MCF 10A (cell line): ENCODE measurements at regions of chr6 and their contacts with region 1.

Region 1: GRCh38 chr6:36027501-36028087 is at the start of gene MAPK14:
- DNase-seq: peak; percentile 100
- H3K4me3 Mint-ChIP-seq: peak within 1 kb of the TSS; percentile 88
- H3K27ac Mint-ChIP-seq: peak within 1 kb of the TSS; percentile 94
- H3K4me1 Mint-ChIP-seq: peaks cover 9% of the 10 kb centered on the region
- H3K27me3 Mint-ChIP-seq: no peaks in the 10 kb centered on the region
- CTCF ChIP-seq: peak; percentile 74
- total RNA-seq, gene MAPK14: 42.9 and 46.2 TPM in 2 replicates

Region 2: DNA sequence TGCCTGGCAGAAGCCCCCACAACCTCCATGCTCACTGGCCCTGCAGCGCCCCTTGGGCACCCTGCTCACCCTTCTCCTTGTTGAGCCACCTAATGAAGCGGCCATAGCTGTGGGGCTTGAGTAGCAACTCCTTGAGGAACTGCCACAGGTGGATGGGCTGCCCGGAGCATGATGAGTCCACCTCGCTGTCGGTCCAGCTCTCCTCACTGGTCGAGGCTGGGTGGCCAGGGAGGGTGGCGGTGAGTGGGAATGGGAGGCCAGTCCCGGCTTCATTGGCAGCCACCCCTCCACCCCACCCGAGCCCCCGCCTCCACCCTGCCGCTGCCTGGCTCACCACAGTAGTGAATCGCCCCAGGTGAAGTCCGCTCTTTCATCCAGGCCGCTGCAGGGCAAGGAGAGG is 1488.4 kb before region 1 on chr6:
- CTCF ChIA-PET with region 1: no interaction called
- POLR2A ChIA-PET with region 1: no interaction called
- intact Hi-C with region 1: no loop called
- DNase-seq: no peak
- H3K4me3 Mint-ChIP-seq: no peak overlapping the region
- H3K27ac Mint-ChIP-seq: no peak overlapping the region
- H3K4me1 Mint-ChIP-seq: peaks cover 9% of the 10 kb centered on the region
- H3K27me3 Mint-ChIP-seq: no peaks in the 10 kb centered on the region
- CTCF ChIP-seq: no peak

Region 3: GRCh38 chr6:35817515-35817914 is 210.1 kb before region 1 on chr6:
- CTCF ChIA-PET with region 1: no interaction called
- POLR2A ChIA-PET with region 1: no interaction called
- intact Hi-C with region 1: no loop called
- DNase-seq: no peak
- H3K4me3 Mint-ChIP-seq: no peak overlapping the region
- H3K27ac Mint-ChIP-seq: no peak overlapping the region
- H3K4me1 Mint-ChIP-seq: no peaks in the 10 kb centered on the region
- H3K27me3 Mint-ChIP-seq: no peaks in the 10 kb centered on the region
- CTCF ChIP-seq: no peak

Region 4: DNA sequence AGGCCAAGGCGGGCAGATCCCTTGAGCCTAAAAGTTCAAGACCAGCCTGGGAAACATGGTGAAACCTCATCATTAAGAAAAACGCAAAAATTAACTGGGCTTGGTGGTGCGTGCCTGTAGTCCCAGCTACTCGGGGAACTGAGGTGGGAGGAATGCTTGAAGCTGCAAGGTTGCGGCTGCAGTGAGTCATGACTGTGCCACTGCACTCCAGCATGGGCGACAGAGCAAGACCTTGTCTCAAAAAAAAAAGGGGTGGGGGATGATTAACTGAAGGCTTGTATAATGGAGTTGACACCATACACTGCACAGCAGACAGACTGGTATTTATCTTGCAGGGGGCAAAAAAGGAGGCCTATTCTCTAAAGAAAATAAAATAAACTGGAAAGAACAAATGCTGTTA is 134.3 kb before region 1 on chr6:
- CTCF ChIA-PET with region 1: no interaction called
- POLR2A ChIA-PET with region 1: no interaction called
- intact Hi-C with region 1: no loop called
- DNase-seq: peak; percentile 16
- H3K4me3 Mint-ChIP-seq: no peak overlapping the region
- H3K27ac Mint-ChIP-seq: no peak overlapping the region
- H3K4me1 Mint-ChIP-seq: peaks cover 16% of the 10 kb centered on the region
- H3K27me3 Mint-ChIP-seq: no peaks in the 10 kb centered on the region
- CTCF ChIP-seq: no peak

Region 5: DNA sequence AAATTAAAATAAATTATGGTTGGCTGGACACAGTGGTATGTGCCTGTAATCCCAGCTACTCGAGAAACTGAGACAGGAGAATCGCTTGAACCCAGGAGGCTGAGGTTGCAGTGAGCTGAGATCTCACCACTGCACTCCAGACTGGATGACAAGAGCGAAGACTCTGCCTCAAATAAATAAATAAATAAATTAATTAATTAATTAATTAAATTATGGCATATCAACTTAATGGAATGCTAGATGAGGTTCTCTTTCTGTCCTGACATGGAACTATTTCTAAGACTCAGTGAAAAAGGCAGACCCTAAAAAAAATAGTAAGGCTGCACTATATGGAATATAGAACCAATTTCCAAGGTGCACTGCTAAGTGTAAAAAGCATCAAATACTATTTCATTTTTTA is 111.5 kb before region 1 on chr6:
- CTCF ChIA-PET with region 1: interaction called, 3 read pairs
- POLR2A ChIA-PET with region 1: interaction called, 54 read pairs
- intact Hi-C with region 1: loop called (anchors 2 kb)
- DNase-seq: no peak
- H3K4me3 Mint-ChIP-seq: no peak overlapping the region
- H3K27ac Mint-ChIP-seq: no peak overlapping the region
- H3K4me1 Mint-ChIP-seq: peaks cover 12% of the 10 kb centered on the region
- H3K27me3 Mint-ChIP-seq: no peaks in the 10 kb centered on the region
- CTCF ChIP-seq: no peak

Region 6: DNA sequence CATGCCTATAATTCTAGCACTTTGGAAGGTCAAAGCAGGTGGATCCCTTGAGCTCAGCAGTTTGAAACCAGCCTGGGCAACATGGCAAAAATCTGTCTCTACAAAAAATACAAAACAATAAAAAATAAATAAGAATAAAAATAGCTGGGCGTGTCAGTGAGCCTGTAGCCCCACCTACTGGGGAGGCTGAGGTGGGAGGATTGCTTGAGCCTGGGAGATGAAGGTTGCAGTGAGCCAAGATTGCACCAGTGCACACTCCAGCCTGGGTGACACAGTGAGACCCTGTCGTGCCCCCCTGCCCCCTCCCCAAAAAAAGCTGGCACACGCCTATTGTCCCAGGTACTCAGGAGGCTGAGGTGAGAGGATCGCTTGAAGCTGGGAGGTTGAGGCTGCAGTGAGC is 71.6 kb before region 1 on chr6:
- CTCF ChIA-PET with region 1: no interaction called
- POLR2A ChIA-PET with region 1: interaction called, 20 read pairs
- intact Hi-C with region 1: no loop called
- DNase-seq: peak; percentile 11
- H3K4me3 Mint-ChIP-seq: no peak overlapping the region
- H3K27ac Mint-ChIP-seq: no peak overlapping the region
- H3K4me1 Mint-ChIP-seq: peaks cover 40% of the 10 kb centered on the region
- H3K27me3 Mint-ChIP-seq: peaks cover 27% of the 10 kb centered on the region
- CTCF ChIP-seq: peak; percentile 28

Region 7: DNA sequence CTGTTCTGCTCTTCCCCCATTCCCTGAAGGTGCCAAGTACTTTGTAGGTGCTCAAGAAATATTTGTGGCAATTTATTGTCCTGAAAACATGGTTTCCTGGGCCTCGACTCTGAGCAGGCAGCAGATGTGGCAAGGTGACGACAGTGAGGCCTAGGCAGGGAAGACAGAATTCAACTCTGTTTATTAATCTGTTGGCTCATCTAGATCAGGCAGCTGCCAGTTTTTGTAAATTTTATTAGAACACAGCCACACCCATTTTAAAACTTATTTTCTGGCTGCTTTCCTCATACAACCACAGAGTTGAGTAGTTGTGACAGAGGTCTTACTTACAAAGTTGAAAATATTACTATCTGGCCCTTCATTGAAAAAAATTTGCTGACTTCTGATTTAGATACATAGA is 24.5 kb after region 1 on chr6:
- CTCF ChIA-PET with region 1: interaction called, 4 read pairs
- POLR2A ChIA-PET with region 1: interaction called, 77 read pairs
- intact Hi-C with region 1: no loop called
- DNase-seq: no peak
- H3K4me3 Mint-ChIP-seq: no peak overlapping the region
- H3K27ac Mint-ChIP-seq: no peak overlapping the region
- H3K4me1 Mint-ChIP-seq: no peaks in the 10 kb centered on the region
- H3K27me3 Mint-ChIP-seq: no peaks in the 10 kb centered on the region
- CTCF ChIP-seq: no peak

Region 8: DNA sequence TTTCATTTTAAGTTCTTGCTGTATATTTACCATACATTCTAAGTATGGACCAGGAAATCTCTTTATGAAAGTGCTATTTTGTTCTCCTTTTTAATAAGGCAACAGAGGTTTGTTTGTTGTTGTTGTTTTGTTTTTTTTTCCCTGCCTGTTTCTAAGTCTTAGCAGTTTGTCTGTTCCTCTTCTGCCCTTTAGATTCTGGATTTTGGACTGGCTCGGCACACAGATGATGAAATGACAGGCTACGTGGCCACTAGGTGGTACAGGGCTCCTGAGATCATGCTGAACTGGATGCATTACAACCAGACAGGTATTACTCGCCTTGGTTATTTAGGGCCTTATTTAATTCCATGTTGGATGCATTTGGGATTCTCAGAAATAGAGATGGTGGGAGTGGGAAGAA is 48.1 kb after region 1 on chr6:
- CTCF ChIA-PET with region 1: no interaction called
- POLR2A ChIA-PET with region 1: interaction called, 11 read pairs
- intact Hi-C with region 1: no loop called
- DNase-seq: peak; percentile 25
- H3K4me3 Mint-ChIP-seq: no peak overlapping the region
- H3K27ac Mint-ChIP-seq: peak overlapping the region; percentile 46
- H3K4me1 Mint-ChIP-seq: no peaks in the 10 kb centered on the region
- H3K27me3 Mint-ChIP-seq: no peaks in the 10 kb centered on the region
- CTCF ChIP-seq: peak; percentile 9

Region 9: GRCh38 chr6:36094753-36095496 is 67.3 kb after region 1 on chr6:
- CTCF ChIA-PET with region 1: interaction called, 134 read pairs
- POLR2A ChIA-PET with region 1: interaction called, 112 read pairs
- intact Hi-C with region 1: loop called (anchors 1 kb)
- DNase-seq: peak; percentile 81
- H3K4me3 Mint-ChIP-seq: no peak overlapping the region
- H3K27ac Mint-ChIP-seq: peak overlapping the region; percentile 4
- H3K4me1 Mint-ChIP-seq: peaks cover 10% of the 10 kb centered on the region
- H3K27me3 Mint-ChIP-seq: no peaks in the 10 kb centered on the region
- CTCF ChIP-seq: peak; percentile 94

Region 10: GRCh38 chr6:36196880-36197548 is 169.4 kb after region 1 on chr6:
- CTCF ChIA-PET with region 1: interaction called, 3 read pairs
- POLR2A ChIA-PET with region 1: interaction called, 6 read pairs
- intact Hi-C with region 1: loop called (anchors 1 kb)
- DNase-seq: peak; percentile 96
- H3K4me3 Mint-ChIP-seq: peak overlapping the region; percentile 87
- H3K27ac Mint-ChIP-seq: peak overlapping the region; percentile 27
- H3K4me1 Mint-ChIP-seq: peaks cover 13% of the 10 kb centered on the region
- H3K27me3 Mint-ChIP-seq: peaks cover 10% of the 10 kb centered on the region
- CTCF ChIP-seq: no peak